ENCODE measurements at regions of chr16 and their contacts with region 1.

Region 1: GRCh38 chr16:12067714-12068401 is 91.3 kb downstream of the SNX29 start:
- DNase-seq: peak; percentile 68
- H3K4me3 ChIP-seq: no peak overlapping the region
- H3K27ac ChIP-seq: no peak overlapping the region
- H3K4me1 ChIP-seq: no peaks in the 10 kb centered on the region
- H3K27me3 ChIP-seq: no peaks in the 10 kb centered on the region
- CTCF ChIP-seq: peak; percentile 84 to 96 (median 95)
- POLR2A ChIP-seq: no peak

Region 2: GRCh38 chr16:11955713-11956123 is 112.1 kb before region 1 on chr16:
- intact Hi-C with region 1: loop called (anchors 10 kb)
- DNase-seq: no peak
- H3K4me3 ChIP-seq: no peak overlapping the region
- H3K27ac ChIP-seq: no peak overlapping the region
- H3K4me1 ChIP-seq: no peaks in the 10 kb centered on the region
- H3K27me3 ChIP-seq: no peaks in the 10 kb centered on the region
- CTCF ChIP-seq: no peak
- POLR2A ChIP-seq: no peak

Region 3: DNA sequence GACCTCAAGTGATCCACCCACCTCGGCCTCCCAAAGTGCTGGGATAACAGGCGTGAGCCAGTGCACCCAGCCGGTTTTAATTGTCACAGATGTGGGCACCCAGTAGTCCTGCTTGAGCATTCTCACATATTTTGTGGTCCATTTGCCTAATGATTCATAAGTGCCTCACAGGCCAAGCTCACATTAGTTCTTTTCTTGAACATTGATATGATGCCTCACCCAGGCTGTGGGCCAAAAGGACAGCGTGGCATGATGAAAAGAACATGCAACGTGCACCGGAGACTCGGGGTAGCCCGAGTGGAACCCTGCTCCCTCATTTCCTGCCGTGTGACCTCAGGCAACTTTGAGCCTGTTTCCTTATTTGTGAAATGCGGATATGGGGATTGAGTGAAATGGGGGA is 90.6 kb after region 1 on chr16:
- intact Hi-C with region 1: no loop called
- DNase-seq: no peak
- H3K4me3 ChIP-seq: no peak overlapping the region
- H3K27ac ChIP-seq: no peak overlapping the region
- H3K4me1 ChIP-seq: no peaks in the 10 kb centered on the region
- H3K27me3 ChIP-seq: no peaks in the 10 kb centered on the region
- CTCF ChIP-seq: no peak
- POLR2A ChIP-seq: no peak

Measured in testis (tissue), 5 donors.